ENCODE measurements at regions of chr15 and their contacts with region 1.

Region 1: DNA sequence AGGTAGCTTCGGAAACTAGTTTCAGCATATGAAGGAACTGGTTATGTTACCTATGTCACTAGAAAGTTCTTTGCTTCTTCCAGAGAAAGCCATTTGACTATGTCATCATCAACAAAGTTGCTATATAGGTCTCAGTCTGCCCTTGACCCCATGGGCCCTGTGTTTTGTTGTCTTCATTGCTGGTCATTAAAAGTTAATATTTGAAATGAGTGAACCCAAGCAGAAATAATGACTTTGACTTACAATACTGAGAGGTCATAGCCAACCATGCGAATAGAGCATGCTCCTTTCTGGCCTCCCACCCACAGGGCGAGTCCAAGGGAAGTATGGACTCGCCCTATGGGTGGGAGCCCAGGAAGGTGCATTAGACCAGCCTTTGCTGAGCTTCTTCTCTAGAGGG is 40.9 kb downstream of the APH1B start:
- DNase-seq: no peak
- ATAC-seq: no peak

Region 2: GRCh38 chr15:63374686-63375520 is 56.6 kb after region 1 on chr15:
- intact Hi-C with region 1: loop called in 1 of 2 experiments (anchors 5 kb)
- DNase-seq: peak; percentile 71
- ATAC-seq: peak; percentile 44 to 48

Measured in left cardiac atrium (tissue), 4 donors.